Heart right ventricle (tissue), 16 donors: ENCODE measurements at regions of chr12 and their contacts with region 1.

Region 1: GRCh38 chr12:31238764-31239387 is 87.1 kb downstream of the SINHCAF start:
- DNase-seq: peak; percentile 32 to 36
- ATAC-seq: peak in 7 of 8 donors; percentile 56 to 79 (median 65)
- H3K4me3 ChIP-seq: no peak overlapping the region
- H3K27ac ChIP-seq: no peak overlapping the region
- H3K4me1 ChIP-seq: peaks cover 0 to 6% (median 0%) of the 10 kb centered on the region in 9 donors
- H3K27me3 ChIP-seq: peaks cover 0 to 51% (median 34%) of the 10 kb centered on the region in 7 donors
- CTCF ChIP-seq: peak; percentile 42 to 74 (median 69)

Region 2: GRCh38 chr12:30985814-30986452 is 252.9 kb before region 1 on chr12:
- intact Hi-C with region 1: loop called in 1 of 10 experiments (anchors 10 kb)
- DNase-seq: peak; percentile 53 to 61
- ATAC-seq: peak; percentile 49 to 75 (median 68)
- H3K4me3 ChIP-seq: no peak overlapping the region
- H3K27ac ChIP-seq: no peak overlapping the region
- H3K4me1 ChIP-seq: peaks cover 0 to 23% (median 0%) of the 10 kb centered on the region in 9 donors
- H3K27me3 ChIP-seq: no peaks in the 10 kb centered on the region
- CTCF ChIP-seq: peak; percentile 22 to 79 (median 72)